SK-N-SH (cell line): ENCODE measurements at regions of chrX and their contacts with region 1.

Region 1: GRCh38 chrX:53071604-53072417 is 10.4 kb upstream of the TSPYL2 start:
- DNase-seq: peak; percentile 68
- H3K4me3 ChIP-seq: peak overlapping the region; percentile 26 to 52
- H3K27ac ChIP-seq: no peak overlapping the region
- H3K4me1 ChIP-seq: peaks cover 0 to 5% of the 10 kb centered on the region in 2 experiments; a peak in 1 of 4 replicates
- H3K27me3 ChIP-seq: peaks cover 6% of the 10 kb centered on the region
- CTCF ChIP-seq: peak; percentile 82
- EP300 ChIP-seq: no peak
- RAD21 ChIP-seq: peak; percentile 81

Region 2: DNA sequence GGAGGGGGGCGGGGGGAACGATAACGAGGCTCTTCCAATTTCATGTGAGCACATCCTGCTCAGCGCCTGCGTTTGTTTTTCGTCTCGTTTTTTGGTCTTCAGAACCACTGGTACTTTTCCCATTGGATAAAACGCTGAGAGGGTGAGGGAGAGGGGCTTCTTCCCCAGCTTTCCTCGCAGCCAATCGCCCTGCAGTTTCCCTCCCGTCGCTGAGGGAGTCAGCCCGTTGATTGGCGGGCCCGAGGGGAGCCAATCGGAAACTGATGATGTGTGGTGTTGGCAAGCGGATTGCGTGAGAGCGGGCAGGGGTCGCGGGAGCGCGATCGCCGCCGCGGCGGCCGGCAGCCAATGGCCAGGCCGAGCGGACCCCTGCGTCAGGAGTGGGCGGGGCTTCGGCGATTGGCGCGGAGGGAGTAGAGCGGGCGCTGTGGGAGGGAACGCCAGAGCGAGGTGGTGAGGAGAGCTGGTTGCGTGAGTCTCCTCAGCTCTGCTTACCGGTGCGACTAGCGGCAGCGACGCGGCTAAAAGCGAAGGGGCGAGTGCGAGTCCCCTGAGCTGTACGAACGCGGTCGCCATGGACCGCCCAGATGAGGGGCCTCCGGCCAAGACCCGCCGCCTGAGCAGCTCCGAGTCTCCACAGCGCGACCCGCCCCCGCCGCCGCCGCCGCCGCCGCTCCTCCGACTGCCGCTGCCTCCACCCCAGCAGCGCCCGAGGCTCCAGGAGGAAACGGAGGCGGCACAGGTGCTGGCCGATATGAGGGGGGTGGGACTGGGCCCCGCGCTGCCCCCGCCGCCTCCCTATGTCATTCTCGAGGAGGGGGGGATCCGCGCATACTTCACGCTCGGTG is 10.3 kb after region 1 on chrX and contains the start of gene TSPYL2:
- CTCF ChIA-PET with region 1: interaction called, 41 read pairs
- POLR2A ChIA-PET with region 1: interaction called, 14 read pairs
- DNase-seq: peak; percentile 92
- H3K4me3 ChIP-seq: peak within 1 kb of the TSS; percentile 60 to 71
- H3K27ac ChIP-seq: peak within 1 kb of the TSS; percentile 72 to 78; a peak in 3 of 4 replicates
- H3K4me1 ChIP-seq: peaks cover 4 to 13% of the 10 kb centered on the region in 2 experiments; a peak in 2 of 4 replicates
- H3K27me3 ChIP-seq: no peaks in the 10 kb centered on the region; the same call in 1 of the 2 replicates
- CTCF ChIP-seq: no peak
- EP300 ChIP-seq: peak in 1 of 2 experiments; percentile 57; a peak in 1 of 4 replicates
- RAD21 ChIP-seq: no peak
- polyA plus RNA-seq, gene TSPYL2: 26.4 and 32.4 TPM in 2 replicates

Region 3: GRCh38 chrX:53088136-53088974 is 16.5 kb after region 1 on chrX:
- CTCF ChIA-PET with region 1: interaction called, 41 read pairs
- POLR2A ChIA-PET with region 1: interaction called, 14 read pairs
- DNase-seq: peak; percentile 86
- H3K4me3 ChIP-seq: peak overlapping the region; percentile 52 to 57
- H3K27ac ChIP-seq: peak overlapping the region; percentile 77 to 86
- H3K4me1 ChIP-seq: peaks cover 0 to 13% of the 10 kb centered on the region in 2 experiments; a peak in 1 of 4 replicates
- H3K27me3 ChIP-seq: no peaks in the 10 kb centered on the region; the same call in 1 of the 2 replicates
- CTCF ChIP-seq: no peak
- EP300 ChIP-seq: no peak
- RAD21 ChIP-seq: no peak